HAP-1 (cell line): ENCODE measurements at regions of chr16 and their contacts with region 1.

Region 1: GRCh38 chr16:12067714-12068401 is 91.3 kb downstream of the SNX29 start:
- DNase-seq: peak; percentile 62 to 85
- H3K4me3 ChIP-seq: no peak overlapping the region
- H3K4me1 ChIP-seq: no peaks in the 10 kb centered on the region
- H3K27me3 ChIP-seq: no peaks in the 10 kb centered on the region

Region 2: GRCh38 chr16:11396241-11397048 is 671.4 kb before region 1 on chr16:
- in situ Hi-C with region 1: loop called (anchors 25 kb)
- DNase-seq: peak; percentile 71 to 89
- H3K4me3 ChIP-seq: no peak overlapping the region
- H3K4me1 ChIP-seq: no peaks in the 10 kb centered on the region
- H3K27me3 ChIP-seq: no peaks in the 10 kb centered on the region

Region 3: GRCh38 chr16:11546608-11547061 is 521.2 kb before region 1 on chr16:
- in situ Hi-C with region 1: loop called (anchors 25 kb)
- DNase-seq: no peak
- H3K4me3 ChIP-seq: no peak overlapping the region
- H3K4me1 ChIP-seq: peaks cover 15% of the 10 kb centered on the region
- H3K27me3 ChIP-seq: no peaks in the 10 kb centered on the region

Region 4: GRCh38 chr16:11949527-11949926 is 118.3 kb before region 1 on chr16:
- in situ Hi-C with region 1: loop called (anchors 10 kb)
- DNase-seq: peak; percentile 41 to 46
- H3K4me3 ChIP-seq: no peak overlapping the region
- H3K4me1 ChIP-seq: no peaks in the 10 kb centered on the region
- H3K27me3 ChIP-seq: no peaks in the 10 kb centered on the region

Region 5: GRCh38 chr16:12740986-12741610 is 673.2 kb after region 1 on chr16:
- in situ Hi-C with region 1: no loop called
- DNase-seq: no peak
- H3K4me3 ChIP-seq: no peak overlapping the region
- H3K4me1 ChIP-seq: no peaks in the 10 kb centered on the region
- H3K27me3 ChIP-seq: no peaks in the 10 kb centered on the region